ENCODE measurements at regions of chr7 and their contacts with region 1.

Region 1: DNA sequence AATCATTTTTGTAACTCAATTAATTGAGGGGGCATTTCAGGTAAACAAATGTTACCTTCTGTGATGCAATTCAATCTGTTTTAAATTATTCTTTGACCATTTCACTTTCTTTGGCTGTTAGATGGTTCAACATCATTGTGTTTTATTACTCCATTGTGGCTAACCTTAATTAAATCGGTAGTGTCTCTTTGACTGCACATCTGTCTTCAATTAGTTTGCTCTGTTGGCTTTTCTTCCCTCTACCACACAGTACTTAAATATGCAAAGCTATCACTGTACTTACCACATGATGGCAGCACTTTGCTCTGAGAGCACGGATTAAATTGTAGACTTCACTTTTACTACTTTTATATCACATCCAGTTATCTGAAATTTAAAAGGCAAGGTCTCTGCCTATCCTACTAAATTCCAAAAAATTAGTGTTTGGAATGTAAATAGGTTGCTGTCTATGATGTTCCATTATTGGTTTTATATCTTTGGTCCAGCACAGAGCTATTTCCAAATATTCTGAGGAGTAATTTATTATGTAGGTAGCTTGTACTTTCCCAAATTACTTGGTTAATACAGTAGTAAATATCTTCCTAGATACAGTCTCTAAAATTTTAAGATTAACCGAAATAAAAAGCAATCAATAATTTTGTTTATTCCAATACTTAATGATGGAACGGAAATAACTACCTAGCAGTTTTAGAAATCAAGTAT is 352.0 kb downstream of the PCLO start:
- DNase-seq: peak; percentile 70
- H3K4me3 ChIP-seq: no peak overlapping the region
- H3K27ac ChIP-seq: no peak overlapping the region
- H3K4me1 ChIP-seq: peaks cover 4% of the 10 kb centered on the region
- H3K27me3 ChIP-seq: no peaks in the 10 kb centered on the region
- CTCF ChIP-seq: peak; percentile 42 to 54
- POLR2A ChIP-seq: no peak

Region 2: DNA sequence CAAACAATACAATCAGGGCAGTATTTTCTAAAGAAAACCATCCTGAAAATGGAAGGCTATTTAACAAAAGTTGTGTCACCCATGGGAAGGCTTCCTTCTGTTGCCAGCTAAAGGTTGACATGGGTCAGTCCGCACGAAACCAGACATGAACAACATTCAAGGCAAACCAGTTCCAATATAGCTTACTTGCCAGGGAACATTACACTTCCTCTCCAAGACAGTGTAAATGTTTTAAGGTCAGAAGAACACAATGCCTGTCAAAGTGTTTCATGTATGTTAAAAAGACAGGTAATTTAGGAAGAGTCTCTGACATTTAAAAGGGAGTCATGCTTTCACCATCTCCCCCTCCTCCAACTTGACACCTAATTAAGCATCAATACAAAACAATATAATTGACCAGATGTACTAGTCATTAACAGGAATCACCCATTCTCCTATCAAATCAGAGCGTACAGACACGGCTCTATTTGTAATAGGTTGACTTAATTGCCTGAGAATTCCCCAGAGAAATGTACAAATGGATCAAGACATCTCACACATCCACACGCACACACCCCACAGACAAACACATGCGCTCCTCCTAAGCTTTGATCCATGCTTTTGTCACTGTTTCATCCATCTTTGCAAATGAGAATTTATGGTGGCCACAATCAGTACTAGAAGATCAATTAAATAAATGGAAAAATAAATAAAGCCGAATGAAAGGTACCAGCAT is 436.6 kb before region 1 on chr7:
- CTCF ChIA-PET with region 1: no interaction called
- POLR2A ChIA-PET with region 1: no interaction called
- dilution Hi-C with region 1: no loop called
- intact Hi-C with region 1: no loop called
- DNase-seq: peak; percentile 3
- H3K4me3 ChIP-seq: no peak overlapping the region
- H3K27ac ChIP-seq: no peak overlapping the region
- H3K4me1 ChIP-seq: no peaks in the 10 kb centered on the region
- H3K27me3 ChIP-seq: no peaks in the 10 kb centered on the region
- CTCF ChIP-seq: no peak
- POLR2A ChIP-seq: no peak

Region 3: GRCh38 chr7:82419200-82419599 is 391.5 kb before region 1 on chr7:
- CTCF ChIA-PET with region 1: no interaction called
- POLR2A ChIA-PET with region 1: no interaction called
- dilution Hi-C with region 1: no loop called
- intact Hi-C with region 1: no loop called
- DNase-seq: no peak
- H3K4me3 ChIP-seq: no peak overlapping the region
- H3K27ac ChIP-seq: no peak overlapping the region
- H3K4me1 ChIP-seq: no peaks in the 10 kb centered on the region
- H3K27me3 ChIP-seq: no peaks in the 10 kb centered on the region
- CTCF ChIP-seq: no peak
- POLR2A ChIP-seq: no peak

Region 4: DNA sequence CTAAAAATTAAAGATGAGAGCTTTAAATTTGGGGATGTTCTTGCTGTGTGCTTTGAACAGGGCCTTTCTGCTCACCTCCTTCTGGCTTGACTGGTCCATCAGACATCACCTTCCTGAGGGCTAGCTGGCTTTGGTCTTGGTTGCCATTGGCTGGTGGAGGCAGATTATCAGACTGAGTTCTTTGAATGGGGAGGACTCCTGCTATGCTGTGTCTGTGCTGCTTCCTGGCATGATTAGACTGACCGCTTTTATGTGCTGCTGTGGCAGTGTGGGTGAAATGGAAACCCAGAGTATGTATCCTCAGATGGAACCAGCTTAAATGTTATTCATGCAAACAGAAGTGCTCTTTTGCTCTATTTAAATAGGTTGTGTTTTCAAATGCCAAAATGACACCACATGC is 10.3 kb after region 1 on chr7:
- CTCF ChIA-PET with region 1: interaction called, 34 read pairs
- POLR2A ChIA-PET with region 1: no interaction called
- dilution Hi-C with region 1: no loop called
- intact Hi-C with region 1: no loop called
- DNase-seq: no peak
- H3K4me3 ChIP-seq: no peak overlapping the region
- H3K27ac ChIP-seq: no peak overlapping the region
- H3K4me1 ChIP-seq: peaks cover 6% of the 10 kb centered on the region
- H3K27me3 ChIP-seq: no peaks in the 10 kb centered on the region
- CTCF ChIP-seq: no peak
- POLR2A ChIP-seq: no peak

Region 5: GRCh38 chr7:82985144-82985802 is 174.6 kb after region 1 on chr7:
- CTCF ChIA-PET with region 1: no interaction called
- POLR2A ChIA-PET with region 1: no interaction called
- dilution Hi-C with region 1: no loop called
- intact Hi-C with region 1: loop called (anchors 5 kb)
- DNase-seq: no peak
- H3K4me3 ChIP-seq: no peak overlapping the region
- H3K27ac ChIP-seq: no peak overlapping the region
- H3K4me1 ChIP-seq: no peaks in the 10 kb centered on the region
- H3K27me3 ChIP-seq: no peaks in the 10 kb centered on the region
- CTCF ChIP-seq: no peak
- POLR2A ChIP-seq: no peak

Region 6: DNA sequence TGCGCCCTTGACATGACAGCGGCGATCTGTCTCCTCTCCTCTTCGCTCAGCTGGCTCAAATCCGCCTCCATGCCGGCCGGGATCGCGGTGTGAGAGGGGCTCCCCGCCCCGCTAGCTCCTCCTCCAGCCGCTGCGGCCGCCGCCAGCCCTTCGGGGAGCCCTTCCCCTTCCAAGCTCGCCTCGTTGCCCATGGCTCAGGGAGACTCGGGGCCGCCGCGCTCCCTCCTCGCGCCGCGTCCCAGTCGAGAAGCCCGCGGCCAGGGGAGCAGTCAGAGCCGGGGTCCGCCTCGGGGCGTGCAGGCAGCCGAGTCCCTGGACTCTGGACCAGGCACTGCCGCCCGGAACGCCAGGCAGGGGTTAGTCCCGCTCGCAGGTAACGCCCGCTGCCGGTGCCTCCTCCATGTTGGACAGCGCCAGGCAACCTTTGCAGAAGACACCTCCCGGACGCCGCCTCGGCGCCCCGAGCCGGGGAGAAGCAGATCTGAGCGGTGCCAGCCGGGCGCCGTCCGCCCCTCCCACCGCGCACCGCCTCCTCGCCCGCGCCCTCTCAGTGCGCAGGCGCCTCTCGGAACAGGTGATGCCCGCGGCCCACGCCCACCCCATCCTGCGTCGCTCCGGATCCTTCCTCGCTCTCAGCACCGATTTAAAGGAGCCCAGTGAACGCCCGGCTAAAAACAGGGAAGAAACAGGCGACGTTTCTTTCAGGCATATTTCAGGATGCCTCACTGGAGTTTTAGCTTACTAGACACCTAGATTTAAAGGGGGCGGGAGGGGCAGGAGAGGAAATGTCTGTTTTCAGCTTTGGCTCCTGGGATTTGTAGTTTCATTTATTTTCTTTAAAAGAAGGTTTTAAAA is 351.9 kb after region 1 on chr7 and contains the start of gene PCLO:
- CTCF ChIA-PET with region 1: interaction called, 7 read pairs
- POLR2A ChIA-PET with region 1: no interaction called
- dilution Hi-C with region 1: no loop called
- intact Hi-C with region 1: loop called (anchors 5 kb)
- DNase-seq: peak; percentile 54
- H3K4me3 ChIP-seq: peak within 1 kb of the TSS; percentile 34 to 62 (median 43)
- H3K27ac ChIP-seq: no peak within 1 kb of the TSS
- H3K4me1 ChIP-seq: peaks cover 9% of the 10 kb centered on the region
- H3K27me3 ChIP-seq: peaks cover 4 to 10% of the 10 kb centered on the region in 2 experiments
- CTCF ChIP-seq: no peak
- POLR2A ChIP-seq: no peak
- total RNA-seq, gene PCLO: 0.65 and 0.75 TPM in 2 replicates

Region 7: GRCh38 chr7:83365746-83366145 is 555.0 kb after region 1 on chr7:
- CTCF ChIA-PET with region 1: interaction called, 10 read pairs
- POLR2A ChIA-PET with region 1: no interaction called
- dilution Hi-C with region 1: no loop called
- intact Hi-C with region 1: loop called (anchors 2 kb)
- DNase-seq: peak; percentile 13
- H3K4me3 ChIP-seq: no peak overlapping the region
- H3K27ac ChIP-seq: no peak overlapping the region
- H3K4me1 ChIP-seq: no peaks in the 10 kb centered on the region
- H3K27me3 ChIP-seq: peaks cover 0 to 6% of the 10 kb centered on the region in 2 experiments
- CTCF ChIP-seq: no peak
- POLR2A ChIP-seq: no peak